SK-N-SH (cell line): ENCODE measurements at regions of chr4 and their contacts with region 1.

Region 1: GRCh38 chr4:140427106-140427961 is at the start of gene CLGN:
- DNase-seq: peak; percentile 95
- H3K4me3 ChIP-seq: peak within 1 kb of the TSS; percentile 78 to 83
- H3K27ac ChIP-seq: peak within 1 kb of the TSS in 1 of 2 experiments; percentile 82; a peak in 2 of 4 replicates
- H3K4me1 ChIP-seq: no peaks in the 10 kb centered on the region; a peak in 1 of 4 replicates
- H3K27me3 ChIP-seq: peaks cover 4% of the 10 kb centered on the region; the same call in 1 of the 2 replicates
- CTCF ChIP-seq: peak; percentile 59
- EP300 ChIP-seq: no peak
- RAD21 ChIP-seq: peak; percentile 43
- polyA plus RNA-seq, gene CLGN: 0.72 and 0.80 TPM in 2 replicates

Region 2: GRCh38 chr4:140373328-140374129 is 53.8 kb before region 1 on chr4 and contains the start of gene SCOC:
- CTCF ChIA-PET with region 1: interaction called, 12 read pairs
- POLR2A ChIA-PET with region 1: interaction called, 11 read pairs
- DNase-seq: peak; percentile 95
- H3K4me3 ChIP-seq: peak within 1 kb of the TSS; percentile 88 to 93
- H3K27ac ChIP-seq: peak within 1 kb of the TSS; percentile 85 to 95
- H3K4me1 ChIP-seq: peaks cover 22 to 23% of the 10 kb centered on the region in 2 experiments; a peak in 3 of 4 replicates
- H3K27me3 ChIP-seq: no peaks in the 10 kb centered on the region
- CTCF ChIP-seq: no peak
- EP300 ChIP-seq: no peak
- RAD21 ChIP-seq: no peak
- polyA plus RNA-seq, gene SCOC: 16.0 and 26.8 TPM in 2 replicates

Region 3: DNA sequence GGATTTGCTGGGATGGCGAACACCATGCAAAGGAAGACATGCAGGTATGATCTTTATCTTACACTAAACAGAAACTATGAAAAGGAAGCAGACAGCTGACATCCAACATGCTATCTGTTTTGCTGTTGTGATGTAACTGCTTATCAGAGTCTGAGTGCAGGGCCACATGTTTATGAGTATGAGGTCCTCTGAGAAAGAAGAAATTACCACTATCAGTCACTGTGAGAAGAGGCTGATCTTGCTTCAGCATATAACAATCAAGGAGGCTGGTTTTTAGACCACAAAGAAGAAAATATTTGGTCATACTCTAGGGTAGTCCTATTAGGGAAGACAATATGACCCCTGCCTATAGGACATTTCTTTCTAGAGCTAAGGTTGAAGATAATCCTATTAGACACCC is 18.4 kb before region 1 on chr4:
- CTCF ChIA-PET with region 1: interaction called, 18 read pairs
- POLR2A ChIA-PET with region 1: no interaction called
- DNase-seq: peak; percentile 18
- H3K4me3 ChIP-seq: no peak overlapping the region
- H3K27ac ChIP-seq: no peak overlapping the region
- H3K4me1 ChIP-seq: no peaks in the 10 kb centered on the region; a peak in 1 of 4 replicates
- H3K27me3 ChIP-seq: no peaks in the 10 kb centered on the region
- CTCF ChIP-seq: no peak
- EP300 ChIP-seq: no peak
- RAD21 ChIP-seq: no peak

Region 4: DNA sequence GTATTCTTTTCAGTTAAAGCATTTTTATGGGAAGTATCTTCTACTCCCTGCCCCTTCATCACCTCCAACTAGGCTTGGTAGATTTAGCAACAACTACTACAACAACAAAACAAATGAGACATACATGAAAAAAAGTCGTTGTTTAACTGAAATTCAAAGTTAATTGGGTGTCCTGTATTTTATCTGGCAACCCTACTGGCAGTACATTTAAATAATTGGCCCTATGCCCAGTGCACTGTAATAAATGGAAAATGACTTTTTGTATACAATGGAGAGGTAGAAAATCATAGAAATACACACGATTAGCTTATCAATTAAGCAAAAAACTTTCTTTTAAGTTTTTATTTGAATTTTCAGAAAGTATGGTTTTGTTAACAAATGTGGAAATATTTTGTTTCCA is 21.5 kb after region 1 on chr4:
- CTCF ChIA-PET with region 1: interaction called, 24 read pairs
- POLR2A ChIA-PET with region 1: no interaction called
- DNase-seq: peak; percentile 12
- H3K4me3 ChIP-seq: no peak overlapping the region
- H3K27ac ChIP-seq: peak overlapping the region in 1 of 2 experiments; percentile 44; a peak in 1 of 4 replicates
- H3K4me1 ChIP-seq: no peaks in the 10 kb centered on the region; a peak in 1 of 4 replicates
- H3K27me3 ChIP-seq: peaks cover 5% of the 10 kb centered on the region; the same call in 1 of the 2 replicates
- CTCF ChIP-seq: no peak
- EP300 ChIP-seq: no peak
- RAD21 ChIP-seq: no peak

Region 5: DNA sequence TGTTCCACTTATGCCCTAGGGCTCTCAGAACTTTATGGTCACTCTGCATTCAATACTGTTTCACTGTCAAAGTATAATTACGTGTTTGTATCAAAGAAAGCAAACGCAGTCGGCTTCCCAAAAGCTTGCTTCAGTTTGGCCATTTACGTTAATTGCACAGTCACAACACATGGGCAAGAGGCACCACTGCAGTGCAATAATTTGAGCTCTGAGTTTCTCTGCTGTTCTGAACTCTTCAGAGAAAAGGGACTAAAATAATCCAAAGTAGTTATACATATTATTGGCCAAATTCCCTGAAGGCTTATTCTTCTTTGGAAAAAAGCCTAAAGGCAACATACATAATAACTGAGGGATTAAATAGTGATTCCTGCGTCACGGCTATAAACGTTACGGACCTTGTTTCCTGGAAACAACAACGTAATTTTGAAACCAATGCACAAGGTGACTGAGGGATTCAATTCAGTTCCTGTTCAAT is 654.6 kb after region 1 on chr4:
- CTCF ChIA-PET with region 1: no interaction called
- POLR2A ChIA-PET with region 1: no interaction called
- DNase-seq: no peak
- H3K4me3 ChIP-seq: no peak overlapping the region
- H3K27ac ChIP-seq: peak overlapping the region in 1 of 2 experiments; percentile 28; a peak in 1 of 4 replicates
- H3K4me1 ChIP-seq: peaks cover 0 to 25% of the 10 kb centered on the region in 2 experiments; a peak in 2 of 4 replicates
- H3K27me3 ChIP-seq: no peaks in the 10 kb centered on the region
- CTCF ChIP-seq: no peak
- EP300 ChIP-seq: no peak
- RAD21 ChIP-seq: no peak